ENCODE measurements at regions of chr11 and their contacts with region 1.

Region 1: GRCh38 chr11:842370-843002 is at the starts of genes POLR2L and TSPAN4:
- DNase-seq: peak in 1 of 2 experiments; percentile 95
- H3K4me3 ChIP-seq: peak within 1 kb of the TSS; percentile 76 to 96 (median 82)
- H3K27ac ChIP-seq: peak within 1 kb of the TSS; percentile 99
- H3K4me1 ChIP-seq: peaks cover 0 to 34% (median 25%) of the 10 kb centered on the region in 4 experiments; a peak in 6 of 7 replicates
- H3K27me3 ChIP-seq: no peaks in the 10 kb centered on the region; a peak in 2 of 7 replicates
- CTCF ChIP-seq: no peak
- EP300 ChIP-seq: peak in 1 of 2 experiments; percentile 98; a peak in 2 of 3 replicates
- POLR2A ChIP-seq: peak in 1 of 2 experiments; percentile 97; a peak in 2 of 3 replicates
- RAD21 ChIP-seq: no peak
- total RNA-seq, gene POLR2L: 151 and 167 TPM in 2 replicates
- total RNA-seq, gene TSPAN4: 74.1 and 75.8 TPM in 2 replicates

Region 2: GRCh38 chr11:575996-576768 is 266.3 kb before region 1 on chr11 and contains the start of gene PHRF1:
- CTCF ChIA-PET with region 1: no interaction called
- POLR2A ChIA-PET with region 1: no interaction called
- DNase-seq: peak; percentile 75 to 96
- H3K4me3 ChIP-seq: peak within 1 kb of the TSS; percentile 87 to 99 (median 88)
- H3K27ac ChIP-seq: peak within 1 kb of the TSS; percentile 100
- H3K4me1 ChIP-seq: peaks cover 6 to 25% (median 15%) of the 10 kb centered on the region in 4 experiments
- H3K27me3 ChIP-seq: peaks cover 8 to 17% (median 13%) of the 10 kb centered on the region in 4 experiments
- CTCF ChIP-seq: no peak
- EP300 ChIP-seq: peak in 1 of 2 experiments; percentile 99; a peak in 2 of 3 replicates
- POLR2A ChIP-seq: peak in 1 of 2 experiments; percentile 92; a peak in 2 of 3 replicates
- RAD21 ChIP-seq: no peak; a peak in 1 of 4 replicates
- total RNA-seq, gene PHRF1: 37.3 and 39.8 TPM in 2 replicates

Region 3: GRCh38 chr11:809287-810039 is 33.0 kb before region 1 on chr11 and contains the start of gene RPLP2:
- CTCF ChIA-PET with region 1: interaction called, 7 read pairs
- POLR2A ChIA-PET with region 1: interaction called, 1,917 read pairs
- DNase-seq: peak; percentile 80 to 100
- H3K4me3 ChIP-seq: peak within 1 kb of the TSS; percentile 66 to 100 (median 90)
- H3K27ac ChIP-seq: peak within 1 kb of the TSS; percentile 99
- H3K4me1 ChIP-seq: peaks cover 0 to 10% (median 3%) of the 10 kb centered on the region in 4 experiments; a peak in 4 of 7 replicates
- H3K27me3 ChIP-seq: no peaks in the 10 kb centered on the region
- CTCF ChIP-seq: no peak
- EP300 ChIP-seq: no peak; a peak in 1 of 3 replicates
- POLR2A ChIP-seq: peak in 1 of 2 experiments; percentile 90; a peak in 2 of 3 replicates
- RAD21 ChIP-seq: no peak
- total RNA-seq, gene RPLP2: 2,084 and 2,106 TPM in 2 replicates

Region 4: GRCh38 chr11:830295-831117 is 12.0 kb before region 1 on chr11:
- CTCF ChIA-PET with region 1: interaction called, 26 read pairs
- POLR2A ChIA-PET with region 1: interaction called, 1,917 read pairs
- DNase-seq: no peak
- H3K4me3 ChIP-seq: peak overlapping the region; percentile 45 to 74 (median 56)
- H3K27ac ChIP-seq: no peak overlapping the region
- H3K4me1 ChIP-seq: peaks cover 0 to 54% (median 47%) of the 10 kb centered on the region in 4 experiments; a peak in 6 of 7 replicates
- H3K27me3 ChIP-seq: peaks cover 6 to 41% (median 31%) of the 10 kb centered on the region in 4 experiments
- CTCF ChIP-seq: peak in 1 of 3 experiments; percentile 12; a peak in 1 of 4 replicates
- EP300 ChIP-seq: no peak
- POLR2A ChIP-seq: no peak
- RAD21 ChIP-seq: no peak

Region 5: DNA sequence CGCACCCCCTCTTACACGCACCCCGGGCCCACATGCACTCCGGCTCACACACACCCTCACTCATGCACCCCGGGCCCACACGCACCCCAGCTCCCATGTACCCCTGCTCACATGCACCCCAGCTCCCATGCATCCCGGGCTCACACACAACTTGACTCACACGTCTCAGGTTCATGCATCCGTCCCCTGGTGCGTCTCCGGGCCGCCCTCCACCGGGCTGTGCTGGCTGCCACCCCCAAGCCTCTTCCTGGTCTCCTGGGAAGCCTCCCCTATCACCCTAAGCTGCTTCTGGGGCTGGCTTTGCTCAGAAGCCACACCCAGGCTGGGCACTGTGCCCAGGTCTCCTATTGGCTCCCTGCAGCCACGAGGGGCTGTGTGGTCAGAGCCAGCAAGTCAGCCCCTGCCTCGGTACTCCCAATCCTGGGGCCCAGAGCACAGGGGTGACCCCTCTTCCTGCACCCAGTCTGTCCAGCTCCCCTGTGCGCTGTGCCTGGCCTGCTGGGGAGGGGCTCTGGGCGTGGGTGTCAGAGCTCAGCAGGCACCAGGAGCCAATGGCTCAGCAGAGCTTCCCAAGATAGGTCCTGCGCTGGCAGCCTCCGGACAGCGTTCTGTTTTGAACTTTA is 17.1 kb after region 1 on chr11:
- CTCF ChIA-PET with region 1: interaction called, 74 read pairs
- POLR2A ChIA-PET with region 1: interaction called, 234 read pairs
- DNase-seq: no peak
- H3K4me3 ChIP-seq: no peak overlapping the region
- H3K27ac ChIP-seq: no peak overlapping the region
- H3K4me1 ChIP-seq: peaks cover 0 to 35% (median 30%) of the 10 kb centered on the region in 4 experiments; a peak in 6 of 7 replicates
- H3K27me3 ChIP-seq: peaks cover 0 to 2% (median 0%) of the 10 kb centered on the region in 4 experiments; a peak in 2 of 7 replicates
- CTCF ChIP-seq: no peak
- EP300 ChIP-seq: no peak
- POLR2A ChIP-seq: no peak
- RAD21 ChIP-seq: no peak

Region 6: GRCh38 chr11:898143-898511 is 55.6 kb after region 1 on chr11:
- CTCF ChIA-PET with region 1: interaction called, 15 read pairs
- POLR2A ChIA-PET with region 1: interaction called, 4 read pairs
- DNase-seq: no peak
- H3K4me3 ChIP-seq: no peak overlapping the region
- H3K27ac ChIP-seq: no peak overlapping the region; the same call in 1 of the 2 replicates
- H3K4me1 ChIP-seq: no peaks in the 10 kb centered on the region; a peak in 2 of 7 replicates
- H3K27me3 ChIP-seq: no peaks in the 10 kb centered on the region
- CTCF ChIP-seq: peak in 2 of 3 experiments; percentile 46 to 75; a peak in 2 of 4 replicates
- EP300 ChIP-seq: no peak
- POLR2A ChIP-seq: no peak
- RAD21 ChIP-seq: peak; percentile 52 to 70; a peak in 3 of 4 replicates